GM10248 (cell line): ENCODE measurements at regions of chr2 and their contacts with region 1.

Region 1: GRCh38 chr2:169694113-169694903 is at the starts of genes CFAP210 and PHOSPHO2:
- DNase-seq: peak; percentile 97
- CTCF ChIP-seq: no peak

Region 2: DNA sequence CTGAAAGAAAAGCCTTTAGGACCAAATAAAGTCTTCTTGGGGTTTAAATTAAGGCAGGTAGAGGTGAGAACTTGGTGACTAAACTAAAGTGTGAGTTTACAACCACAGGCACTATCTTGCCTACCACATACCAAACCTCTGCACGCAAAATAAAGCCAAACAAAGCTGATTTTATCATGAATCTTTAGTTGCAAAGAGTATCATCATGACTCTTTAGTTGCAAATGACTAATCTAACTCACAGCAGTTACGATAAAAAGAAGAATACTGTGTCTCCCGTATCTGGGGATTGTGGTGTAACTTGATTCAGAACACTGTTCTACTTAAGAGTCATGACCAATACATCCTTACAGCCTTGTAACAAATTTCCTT is 11.3 kb before region 1 on chr2:
- CTCF ChIA-PET with region 1: interaction called, 11 read pairs
- POLR2A ChIA-PET with region 1: no interaction called
- DNase-seq: no peak
- CTCF ChIP-seq: no peak